ENCODE measurements at regions of chr13 and their contacts with region 1.

Region 1: DNA sequence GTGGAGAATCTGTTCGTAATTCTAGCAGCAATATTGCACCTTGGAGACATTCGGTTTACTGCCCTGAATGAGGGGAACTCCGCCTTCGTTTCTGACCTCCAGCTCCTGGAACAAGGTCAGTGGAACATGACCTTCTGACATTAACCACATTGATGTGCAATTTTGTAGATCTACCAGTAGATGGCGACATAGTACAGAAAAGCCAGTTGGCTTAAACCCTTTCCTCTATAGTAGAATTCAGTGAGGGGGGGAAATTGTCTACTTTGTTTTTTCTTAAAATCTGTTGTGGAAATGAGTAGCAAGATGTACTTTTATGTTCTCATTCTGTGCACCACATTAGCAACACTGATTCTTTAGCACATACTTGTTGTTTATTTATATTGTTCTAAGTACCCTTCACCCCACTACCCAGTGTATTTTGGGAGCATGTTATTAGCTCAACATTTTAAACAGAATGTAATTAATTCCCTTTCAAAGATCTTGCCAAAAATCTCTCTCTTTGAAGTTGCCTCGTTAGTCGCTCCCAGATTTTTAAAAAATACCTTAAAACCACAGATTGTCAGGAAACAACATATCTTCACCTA is 332.2 kb downstream of the MYO16 start:
- DNase-seq: peak; percentile 49
- CTCF ChIP-seq: peak; percentile 67

Region 2: DNA sequence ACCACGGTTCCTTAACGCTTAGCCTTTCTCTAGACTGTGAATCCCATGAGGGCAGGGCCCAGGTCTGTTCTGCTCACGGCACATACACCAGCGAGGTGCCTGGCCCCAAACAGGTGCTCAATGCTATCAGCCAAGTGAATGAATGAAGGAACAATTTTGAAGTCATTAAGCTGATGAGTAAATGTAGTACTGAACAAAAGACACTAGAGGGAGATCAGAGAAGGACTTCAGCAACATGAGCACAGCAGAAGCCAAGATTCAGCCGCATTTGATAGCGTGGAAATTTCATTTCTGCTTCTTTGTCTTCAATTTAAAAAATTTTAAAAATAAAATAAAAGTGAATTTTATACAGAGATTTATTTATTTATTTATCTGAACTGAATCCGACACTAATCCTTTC is 352.3 kb before region 1 on chr13:
- CTCF ChIA-PET with region 1: no interaction called
- POLR2A ChIA-PET with region 1: no interaction called
- DNase-seq: no peak
- CTCF ChIP-seq: peak; percentile 17

Region 3: DNA sequence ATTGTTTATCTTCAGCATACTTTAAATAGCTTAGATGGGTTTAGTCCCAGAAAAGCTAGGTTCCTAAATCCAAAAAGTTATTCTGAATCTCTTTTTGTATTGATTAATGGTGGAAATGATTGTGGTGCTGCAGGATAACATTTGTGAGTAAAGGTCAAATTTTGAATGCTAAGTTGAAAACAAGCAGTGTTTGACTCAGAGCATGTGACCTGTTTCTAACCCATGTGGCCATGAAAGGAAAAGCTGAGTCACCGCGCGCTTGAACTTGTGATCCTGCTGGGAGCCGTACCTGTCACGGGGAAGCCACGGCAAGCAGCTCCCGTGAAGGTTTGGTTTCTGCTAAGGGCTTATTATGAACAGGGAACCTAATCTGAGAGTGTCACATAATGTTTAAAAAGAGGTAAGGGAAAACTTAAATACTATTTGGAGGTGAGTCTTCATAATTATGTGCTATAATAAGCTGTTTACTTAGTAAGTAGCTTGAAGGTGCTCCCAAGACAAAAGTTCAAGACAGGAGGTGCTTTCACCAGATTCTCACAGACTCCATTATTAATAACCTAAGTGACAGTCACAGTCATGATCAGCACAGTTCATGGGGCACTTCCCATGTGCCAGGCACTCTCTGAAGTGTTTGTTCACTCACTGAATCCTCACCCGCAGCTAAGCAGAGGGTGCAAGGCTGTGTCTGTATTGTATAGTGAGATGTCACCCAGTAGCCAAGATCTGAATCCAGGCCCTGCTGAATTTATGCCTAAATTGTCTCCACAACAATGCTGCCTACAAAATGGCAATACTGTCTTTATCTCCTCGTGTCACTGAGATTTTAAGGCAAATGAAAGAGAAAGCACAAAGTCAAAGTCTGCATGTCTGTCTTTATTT is 45.8 kb before region 1 on chr13:
- CTCF ChIA-PET with region 1: interaction called, 22 read pairs
- POLR2A ChIA-PET with region 1: no interaction called
- DNase-seq: peak; percentile 71
- CTCF ChIP-seq: no peak

Region 4: DNA sequence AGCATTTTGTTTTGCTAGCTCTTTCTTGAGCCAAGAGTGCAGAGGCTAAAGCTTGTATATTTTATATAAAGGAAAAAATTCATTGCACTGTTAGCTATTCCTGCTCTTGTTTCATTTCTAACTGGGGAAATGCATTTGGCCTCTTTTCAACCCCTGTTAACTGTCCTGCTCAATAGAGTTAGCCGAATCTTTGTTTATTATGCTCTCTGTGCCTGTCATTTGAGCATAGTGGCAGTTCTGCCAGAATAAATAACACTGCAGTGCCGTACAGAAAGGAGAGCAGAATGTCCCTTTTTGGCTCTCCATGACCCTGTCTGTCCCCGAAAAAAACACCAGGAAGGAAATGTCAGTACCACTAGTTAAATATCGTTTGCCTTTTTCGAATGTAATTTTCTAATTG is 18.6 kb after region 1 on chr13:
- CTCF ChIA-PET with region 1: interaction called, 14 read pairs
- POLR2A ChIA-PET with region 1: no interaction called
- DNase-seq: no peak
- CTCF ChIP-seq: no peak

Region 5: GRCh38 chr13:110412132-110412914 is 1450.7 kb after region 1 on chr13:
- CTCF ChIA-PET with region 1: interaction called, 11 read pairs
- POLR2A ChIA-PET with region 1: no interaction called
- DNase-seq: peak; percentile 87
- CTCF ChIP-seq: peak; percentile 83

Measured in GM10248 (cell line).